AG04450 (cell line): ENCODE measurements at regions of chr12 and their contacts with region 1.

Region 1: GRCh38 chr12:27861428-27862167 is 81.6 kb upstream of the MANSC4 start:
- DNase-seq: no peak
- H3K4me3 ChIP-seq: no peak overlapping the region
- H3K27ac ChIP-seq: no peak overlapping the region
- H3K27me3 ChIP-seq: no peaks in the 10 kb centered on the region
- CTCF ChIP-seq: no peak

Region 2: DNA sequence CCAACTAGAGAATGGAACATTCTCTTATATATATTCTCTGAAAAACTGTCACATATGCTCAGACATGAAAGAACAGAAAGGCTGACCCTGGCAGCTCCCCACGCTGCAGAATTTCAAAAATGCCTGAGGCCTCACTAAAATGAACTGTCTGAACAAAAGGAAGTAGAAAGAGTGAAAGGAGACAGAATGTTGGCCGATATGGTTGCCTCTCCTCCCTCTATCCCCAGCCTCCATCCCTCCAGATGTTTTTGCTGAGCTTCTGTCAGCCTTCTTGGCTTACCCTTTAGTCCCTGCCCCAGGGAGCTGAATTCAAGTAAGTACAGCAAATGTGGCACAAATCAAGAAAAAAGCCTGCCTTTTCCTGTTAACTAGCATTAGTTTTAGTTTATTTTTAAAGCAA is 408.2 kb before region 1 on chr12:
- CTCF ChIA-PET with region 1: no interaction called
- POLR2A ChIA-PET with region 1: no interaction called
- DNase-seq: no peak
- H3K4me3 ChIP-seq: no peak overlapping the region
- H3K27ac ChIP-seq: no peak overlapping the region
- H3K27me3 ChIP-seq: no peaks in the 10 kb centered on the region
- CTCF ChIP-seq: no peak

Region 3: GRCh38 chr12:27480016-27480415 is 381.6 kb before region 1 on chr12:
- CTCF ChIA-PET with region 1: no interaction called
- POLR2A ChIA-PET with region 1: no interaction called
- DNase-seq: no peak
- H3K4me3 ChIP-seq: no peak overlapping the region
- H3K27ac ChIP-seq: no peak overlapping the region
- H3K27me3 ChIP-seq: no peaks in the 10 kb centered on the region
- CTCF ChIP-seq: no peak

Region 4: DNA sequence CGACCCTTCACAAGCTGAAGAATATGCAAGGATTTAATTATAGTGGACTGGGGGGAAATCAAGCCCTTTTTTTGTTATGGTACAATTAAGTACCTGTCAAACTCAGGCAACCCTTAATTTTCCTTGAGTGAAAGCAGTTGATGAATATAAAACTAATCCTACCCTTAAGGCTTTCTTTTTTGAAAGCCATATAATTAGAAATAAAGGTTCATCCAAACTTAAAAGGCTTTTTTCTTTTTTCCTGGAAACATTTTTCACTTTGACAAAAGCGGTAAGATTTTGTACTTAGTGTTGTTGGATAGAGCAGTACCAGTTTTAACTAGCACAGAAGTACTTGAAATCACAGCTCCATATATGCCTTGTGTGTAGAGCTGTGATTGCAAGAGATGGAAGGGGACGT is 10.3 kb after region 1 on chr12:
- CTCF ChIA-PET with region 1: no interaction called
- POLR2A ChIA-PET with region 1: no interaction called
- DNase-seq: no peak
- H3K4me3 ChIP-seq: no peak overlapping the region
- H3K27ac ChIP-seq: no peak overlapping the region
- H3K27me3 ChIP-seq: no peaks in the 10 kb centered on the region
- CTCF ChIP-seq: no peak

Region 5: DNA sequence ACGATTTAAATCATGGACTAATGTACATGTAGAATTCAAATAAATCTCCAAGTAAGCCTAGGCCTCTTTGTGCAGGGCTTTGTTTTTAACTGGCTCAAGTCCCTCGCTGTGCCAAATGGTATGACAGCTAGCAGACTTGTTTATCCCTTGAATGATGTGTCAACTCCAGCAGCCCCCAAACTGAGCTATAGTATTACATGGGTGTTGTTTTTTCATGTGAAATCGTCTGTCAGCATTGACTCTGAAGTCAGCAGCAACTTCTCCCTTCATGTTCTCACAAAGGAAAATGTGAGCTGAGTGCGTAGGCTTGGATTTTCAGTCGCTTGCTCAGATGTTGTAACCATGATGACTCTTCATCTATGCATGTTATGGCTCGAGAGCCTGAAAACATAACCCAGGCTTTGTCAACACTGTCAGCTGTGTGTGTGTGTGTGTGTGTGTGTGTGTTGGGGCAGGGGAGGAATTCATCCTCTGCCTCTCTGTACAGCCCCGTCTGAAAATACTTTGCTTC is 37.6 kb after region 1 on chr12:
- CTCF ChIA-PET with region 1: no interaction called
- POLR2A ChIA-PET with region 1: interaction called, 10 read pairs
- DNase-seq: peak; percentile 98
- H3K4me3 ChIP-seq: no peak overlapping the region
- H3K27ac ChIP-seq: peak overlapping the region; percentile 91
- H3K27me3 ChIP-seq: no peaks in the 10 kb centered on the region
- CTCF ChIP-seq: no peak